GM10248 (cell line): ENCODE measurements at regions of chr2 and their contacts with region 1.

Region 1: GRCh38 chr2:232521959-232522622 is 1.9 kb downstream of the PRSS56 start:
- DNase-seq: peak; percentile 88
- CTCF ChIP-seq: peak; percentile 68

Region 2: DNA sequence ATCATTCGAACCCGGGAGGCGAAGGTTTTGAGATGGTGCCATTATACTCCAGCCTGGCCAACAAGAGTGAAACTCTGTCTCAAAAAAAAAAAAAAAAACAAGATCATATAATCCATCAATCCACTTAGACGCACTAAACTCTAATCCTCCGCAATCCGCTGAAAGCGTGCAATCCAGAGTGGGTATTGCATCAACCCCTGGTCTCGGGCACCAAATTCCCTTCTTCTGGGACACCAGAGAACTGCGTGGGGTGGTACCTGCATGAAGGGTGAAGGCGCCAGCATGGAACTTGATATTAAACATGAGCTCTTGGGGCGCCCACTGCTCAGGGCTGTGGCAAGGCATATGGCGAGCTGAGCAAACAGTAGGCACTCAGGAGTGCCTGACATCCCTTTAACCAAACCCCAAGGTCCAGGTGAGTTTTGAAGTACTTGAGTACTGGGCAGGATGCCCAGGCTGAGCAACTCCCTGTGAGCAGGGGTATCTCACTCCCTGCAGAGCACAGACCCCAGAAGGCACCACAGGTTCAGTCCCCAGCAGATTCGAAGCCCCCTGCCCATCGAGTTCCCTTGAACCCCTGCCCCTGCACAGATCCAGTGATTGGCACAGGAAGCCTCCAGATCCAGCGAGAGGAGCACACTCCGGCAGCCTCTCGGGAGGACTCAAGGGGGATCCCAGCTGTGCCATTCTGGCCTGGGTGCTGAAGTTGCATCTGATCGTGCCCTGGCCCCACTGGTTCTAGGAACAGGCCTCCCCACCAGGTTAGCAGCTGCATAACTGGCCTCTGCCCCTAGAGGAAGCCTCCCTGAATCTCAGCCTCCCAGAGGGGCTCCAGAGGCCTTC is 58.2 kb before region 1 on chr2:
- CTCF ChIA-PET with region 1: no interaction called
- POLR2A ChIA-PET with region 1: no interaction called
- DNase-seq: no peak
- CTCF ChIP-seq: no peak

Region 3: DNA sequence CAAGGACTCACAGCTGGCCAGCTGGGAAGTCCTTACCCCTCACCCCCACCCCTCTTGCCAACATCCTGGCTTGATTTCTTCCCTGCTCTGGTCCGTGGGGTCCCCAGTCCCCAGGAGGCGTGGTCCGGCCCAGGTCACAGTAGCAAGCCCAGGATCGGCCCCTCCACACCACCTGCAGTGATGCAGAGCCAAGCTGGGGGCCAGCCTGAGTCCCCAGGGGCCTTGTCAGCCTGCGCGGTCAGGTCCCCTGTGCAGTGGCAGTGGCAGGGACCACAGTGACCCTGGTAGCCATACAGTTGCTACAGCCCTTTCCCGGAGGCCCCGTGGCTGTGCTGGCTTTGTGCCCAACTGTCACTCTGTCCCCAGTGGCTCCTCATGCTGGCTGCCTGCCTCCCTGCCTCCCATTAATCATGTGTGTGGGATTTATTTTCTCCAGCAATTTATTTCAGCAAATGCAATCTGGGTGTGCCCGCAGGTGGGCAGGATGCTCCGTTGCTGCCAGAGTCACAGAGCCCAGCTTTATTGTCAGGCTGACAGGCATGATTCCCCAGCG is 10.7 kb before region 1 on chr2:
- CTCF ChIA-PET with region 1: interaction called, 10 read pairs
- POLR2A ChIA-PET with region 1: no interaction called
- DNase-seq: no peak
- CTCF ChIP-seq: no peak